ENCODE measurements at regions of chr20 and their contacts with region 1.

Region 1: DNA sequence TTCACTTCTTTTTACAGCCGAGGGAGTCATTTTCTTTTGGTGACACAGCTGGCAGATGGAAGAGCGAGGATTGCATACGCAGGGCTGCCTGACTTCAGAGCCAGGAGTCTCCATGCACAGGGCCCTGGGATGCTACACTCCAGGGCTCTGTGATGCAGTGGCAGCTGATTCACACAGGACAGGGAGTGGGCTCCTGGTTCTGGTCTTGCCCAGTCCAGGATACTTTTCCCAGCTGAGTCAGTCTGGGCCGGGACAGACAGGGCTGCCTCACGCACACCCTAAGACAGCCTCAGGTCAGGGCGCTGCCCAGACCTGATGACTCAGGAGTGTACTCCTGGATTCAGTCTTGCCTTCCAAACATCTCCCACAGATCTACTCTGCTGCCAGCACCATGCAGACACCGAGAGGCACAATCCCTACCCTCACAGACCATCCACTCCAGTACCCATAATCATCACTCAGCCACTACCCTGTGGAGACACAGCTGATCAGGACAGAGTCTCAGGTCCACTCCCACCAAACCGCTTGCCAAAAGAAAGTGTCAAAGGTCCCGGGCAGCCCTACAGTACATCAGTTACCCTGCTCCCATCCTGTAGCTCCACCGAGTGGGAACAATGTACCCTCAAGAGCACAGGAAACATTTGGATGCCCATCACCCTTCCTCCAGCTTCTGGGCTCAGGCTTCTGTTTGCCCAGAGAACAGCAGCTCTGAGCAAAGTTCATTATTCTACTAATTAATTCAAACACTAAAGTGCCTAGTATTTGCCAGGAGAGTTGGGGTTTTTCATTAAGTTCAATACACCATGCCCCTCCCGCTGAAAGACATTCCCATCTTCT is 11.5 kb downstream of the SDC4 start:
- DNase-seq: peak; percentile 68
- H3K4me3 ChIP-seq: peak overlapping the region; percentile 37
- H3K27ac ChIP-seq: peak overlapping the region; percentile 98
- H3K27me3 ChIP-seq: no peaks in the 10 kb centered on the region
- CTCF ChIP-seq: no peak

Region 2: GRCh38 chr20:45070932-45071632 is 265.7 kb before region 1 on chr20:
- CTCF ChIA-PET with region 1: no interaction called
- POLR2A ChIA-PET with region 1: no interaction called
- DNase-seq: no peak
- H3K4me3 ChIP-seq: no peak overlapping the region
- H3K27ac ChIP-seq: no peak overlapping the region
- H3K27me3 ChIP-seq: no peaks in the 10 kb centered on the region
- CTCF ChIP-seq: no peak

Region 3: GRCh38 chr20:45347936-45348778 is 11.4 kb after region 1 on chr20 and contains the start of gene SDC4:
- CTCF ChIA-PET with region 1: interaction called, 3 read pairs
- POLR2A ChIA-PET with region 1: interaction called, 58 read pairs
- DNase-seq: no peak
- H3K4me3 ChIP-seq: peak within 1 kb of the TSS; percentile 97
- H3K27ac ChIP-seq: peak within 1 kb of the TSS; percentile 70
- H3K27me3 ChIP-seq: no peaks in the 10 kb centered on the region
- CTCF ChIP-seq: no peak
- polyA plus RNA-seq, gene SDC4: 177 and 204 TPM in 2 replicates